CD8-positive, alpha-beta T cell (primary cell): ENCODE measurements at regions of chr3 and their contacts with region 1.

Region 1: GRCh38 chr3:184145111-184145524 is 10.0 kb downstream of the EIF2B5 start:
- DNase-seq: peak in 5 of 9 experiments; percentile 34 to 64 (median 40)
- ATAC-seq: peak; percentile 74
- H3K4me3 ChIP-seq: no peak overlapping the region
- H3K4me3 Mint-ChIP-seq: no peak overlapping the region
- H3K27ac ChIP-seq: no peak overlapping the region
- H3K27ac Mint-ChIP-seq: peak overlapping the region; percentile 41
- H3K4me1 ChIP-seq: no peaks in the 10 kb centered on the region
- H3K4me1 Mint-ChIP-seq: no peaks in the 10 kb centered on the region
- H3K27me3 ChIP-seq: no peaks in the 10 kb centered on the region
- H3K27me3 Mint-ChIP-seq: no peaks in the 10 kb centered on the region
- CTCF ChIP-seq: no peak

Region 2: DNA sequence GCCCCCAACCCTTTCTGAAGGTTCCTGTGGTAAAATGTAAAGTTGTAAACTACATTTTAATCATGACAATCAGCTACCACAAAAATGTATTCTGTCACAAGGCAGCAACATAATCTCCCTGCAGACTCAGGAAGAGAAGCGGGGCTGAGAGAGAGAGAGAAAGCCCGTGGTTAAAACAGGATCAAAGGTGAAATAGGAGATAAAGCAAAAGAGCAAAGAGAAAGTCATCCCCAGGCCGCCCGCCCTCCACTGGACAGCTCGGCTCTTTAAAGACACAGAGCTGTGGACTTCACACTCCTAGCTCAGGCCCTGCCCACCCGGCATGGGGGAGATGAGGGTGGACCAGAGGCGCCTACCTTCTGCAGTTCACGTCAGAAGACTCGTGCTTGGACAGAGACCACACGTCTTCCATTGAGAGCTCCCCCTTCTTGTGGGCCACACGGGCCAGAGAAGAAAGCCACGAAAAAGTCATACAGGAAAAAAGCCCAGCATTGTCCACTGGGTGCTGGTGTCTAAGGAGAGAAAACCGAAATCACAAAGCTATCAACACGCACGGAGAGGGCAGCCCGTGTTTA is 156.8 kb before region 1 on chr3:
- CTCF ChIA-PET with region 1: no interaction called
- POLR2A ChIA-PET with region 1: no interaction called
- intact Hi-C with region 1: no loop called
- DNase-seq: no peak
- ATAC-seq: no peak
- H3K4me3 ChIP-seq: no peak overlapping the region
- H3K4me3 Mint-ChIP-seq: no peak overlapping the region
- H3K27ac ChIP-seq: no peak overlapping the region
- H3K27ac Mint-ChIP-seq: no peak overlapping the region
- H3K4me1 ChIP-seq: no peaks in the 10 kb centered on the region
- H3K4me1 Mint-ChIP-seq: peaks cover 6% of the 10 kb centered on the region
- H3K27me3 ChIP-seq: no peaks in the 10 kb centered on the region
- H3K27me3 Mint-ChIP-seq: no peaks in the 10 kb centered on the region
- CTCF ChIP-seq: no peak

Region 3: DNA sequence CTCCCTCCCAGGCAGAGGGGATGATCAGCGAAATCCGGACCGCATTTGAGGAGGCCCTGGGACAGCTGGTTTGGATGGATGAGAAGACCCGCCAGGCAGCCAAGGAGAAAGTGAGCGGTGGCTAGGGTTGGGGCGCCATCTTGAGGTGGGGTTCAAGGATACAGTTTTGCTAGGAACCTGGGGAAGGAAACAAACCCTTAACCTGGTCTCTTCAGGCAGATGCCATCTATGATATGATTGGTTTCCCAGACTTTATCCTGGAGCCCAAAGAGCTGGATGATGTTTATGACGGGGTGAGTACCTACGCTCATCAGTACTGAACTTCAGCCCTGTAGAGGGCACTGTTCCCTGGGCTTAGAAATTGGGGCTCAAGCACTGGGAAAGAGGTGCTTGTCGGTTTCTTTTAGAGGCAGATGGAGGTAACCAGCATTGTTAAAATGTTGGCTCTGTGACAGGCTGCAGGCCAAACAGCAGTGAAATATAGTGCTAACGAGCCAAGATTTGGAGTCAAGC is 144.4 kb after region 1 on chr3:
- CTCF ChIA-PET with region 1: interaction called, 3 read pairs
- POLR2A ChIA-PET with region 1: no interaction called
- intact Hi-C with region 1: loop called (anchors 1 kb)
- DNase-seq: peak; percentile 21 to 73 (median 57)
- ATAC-seq: peak; percentile 67
- H3K4me3 ChIP-seq: no peak overlapping the region
- H3K4me3 Mint-ChIP-seq: no peak overlapping the region
- H3K27ac ChIP-seq: no peak overlapping the region
- H3K27ac Mint-ChIP-seq: no peak overlapping the region
- H3K4me1 ChIP-seq: no peaks in the 10 kb centered on the region
- H3K4me1 Mint-ChIP-seq: no peaks in the 10 kb centered on the region
- H3K27me3 ChIP-seq: no peaks in the 10 kb centered on the region
- H3K27me3 Mint-ChIP-seq: peaks cover 13% of the 10 kb centered on the region
- CTCF ChIP-seq: peak; percentile 40